ENCODE measurements at regions of chr2 and their contacts with region 1.

Region 1: GRCh38 chr2:23926750-23927571 is at the start of gene ATAD2B:
- DNase-seq: peak; percentile 99
- H3K4me3 Mint-ChIP-seq: peak within 1 kb of the TSS; percentile 91
- H3K27ac Mint-ChIP-seq: peak within 1 kb of the TSS; percentile 100
- H3K4me1 Mint-ChIP-seq: peaks cover 28% of the 10 kb centered on the region
- H3K27me3 Mint-ChIP-seq: peaks cover 2% of the 10 kb centered on the region
- total RNA-seq, gene ATAD2B: 23.9 and 24.3 TPM in 2 replicates

Region 2: DNA sequence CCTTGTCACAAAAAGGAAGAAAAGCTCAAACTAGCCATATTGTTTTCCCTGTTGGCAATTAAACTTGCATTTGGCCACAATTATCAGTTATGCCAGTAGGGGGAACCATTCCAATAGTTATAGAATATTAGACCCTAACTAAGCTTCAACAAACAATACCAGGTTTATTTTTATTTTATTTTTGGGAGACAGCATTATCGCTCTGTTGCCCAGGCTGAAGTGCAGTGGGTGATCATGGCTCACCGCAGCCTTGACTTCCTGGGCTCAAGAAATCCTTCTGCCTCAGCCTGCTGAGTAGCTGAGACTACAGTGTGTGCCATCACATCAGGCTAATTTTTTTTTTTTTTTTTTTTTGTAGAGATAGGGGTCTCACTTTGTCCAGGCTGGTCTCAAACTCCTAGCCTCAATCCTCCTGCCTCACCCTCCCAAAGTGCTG is 102.2 kb before region 1 on chr2:
- intact Hi-C with region 1: loop called (anchors 1 kb)
- DNase-seq: peak; percentile 83
- H3K4me3 Mint-ChIP-seq: no peak overlapping the region
- H3K27ac Mint-ChIP-seq: no peak overlapping the region
- H3K4me1 Mint-ChIP-seq: peaks cover 2% of the 10 kb centered on the region
- H3K27me3 Mint-ChIP-seq: no peaks in the 10 kb centered on the region

Region 3: DNA sequence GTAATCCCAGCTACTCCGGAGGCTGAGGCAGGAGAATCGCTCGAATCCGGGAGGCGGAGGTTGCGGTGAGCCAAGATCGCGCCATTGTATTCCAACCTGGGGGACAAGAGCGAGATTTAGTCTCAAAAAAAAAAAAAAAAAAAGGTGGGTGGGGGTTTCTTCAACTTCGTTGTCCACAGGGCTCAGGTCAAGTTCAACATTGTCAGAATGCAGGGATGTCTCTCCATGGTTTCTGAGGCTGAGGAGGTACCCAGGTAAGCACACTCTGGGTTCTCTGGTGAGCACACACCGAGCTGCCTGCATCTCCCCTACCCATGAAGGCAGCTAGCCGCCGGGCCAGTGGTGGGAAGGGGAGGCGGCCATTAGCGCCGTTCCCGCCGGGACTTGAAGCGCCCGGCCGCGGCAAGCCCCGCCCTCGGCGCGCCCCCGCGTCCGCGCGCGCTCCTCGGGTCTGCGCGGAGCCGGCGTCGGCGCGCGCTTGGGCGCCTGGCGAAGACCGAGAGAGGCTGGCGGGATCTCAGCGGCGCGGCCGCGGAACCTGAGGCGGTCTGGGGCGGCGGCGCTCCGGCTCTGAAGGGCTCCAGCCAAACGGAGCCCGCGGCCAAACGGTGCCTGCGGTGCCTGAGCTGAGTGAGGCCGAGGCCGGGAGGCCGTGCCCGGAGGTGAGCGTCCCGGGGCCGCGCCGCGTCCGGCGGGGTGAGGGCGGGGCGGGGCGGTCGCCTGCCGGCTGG is 13.2 kb after region 1 on chr2 and contains the start of gene UBXN2A:
- intact Hi-C with region 1: loop called (anchors 1 kb)
- DNase-seq: peak; percentile 95
- H3K4me3 Mint-ChIP-seq: peak within 1 kb of the TSS; percentile 89
- H3K27ac Mint-ChIP-seq: peak within 1 kb of the TSS; percentile 88
- H3K4me1 Mint-ChIP-seq: peaks cover 20% of the 10 kb centered on the region
- H3K27me3 Mint-ChIP-seq: peaks cover 14% of the 10 kb centered on the region
- total RNA-seq, gene UBXN2A: 11.5 and 13.1 TPM in 2 replicates

Region 4: GRCh38 chr2:24009680-24010476 is 82.9 kb after region 1 on chr2 and contains the start of gene MFSD2B:
- intact Hi-C with region 1: no loop called
- DNase-seq: no peak
- H3K4me3 Mint-ChIP-seq: no peak within 1 kb of the TSS
- H3K27ac Mint-ChIP-seq: no peak within 1 kb of the TSS
- H3K4me1 Mint-ChIP-seq: peaks cover 2% of the 10 kb centered on the region
- H3K27me3 Mint-ChIP-seq: peaks cover 45% of the 10 kb centered on the region
- total RNA-seq, gene MFSD2B: 0.14 TPM in 1 of 2 replicates, not detected in the other

Region 5: GRCh38 chr2:24046930-24047702 is 120.2 kb after region 1 on chr2 and contains the start of gene WDCP:
- intact Hi-C with region 1: loop called (anchors 1 kb)
- DNase-seq: peak; percentile 98
- H3K4me3 Mint-ChIP-seq: peak within 1 kb of the TSS; percentile 99
- H3K27ac Mint-ChIP-seq: peak within 1 kb of the TSS; percentile 97
- H3K4me1 Mint-ChIP-seq: peaks cover 18% of the 10 kb centered on the region
- H3K27me3 Mint-ChIP-seq: peaks cover 7% of the 10 kb centered on the region
- total RNA-seq, gene WDCP: 22.9 and 25.0 TPM in 2 replicates

Region 6: DNA sequence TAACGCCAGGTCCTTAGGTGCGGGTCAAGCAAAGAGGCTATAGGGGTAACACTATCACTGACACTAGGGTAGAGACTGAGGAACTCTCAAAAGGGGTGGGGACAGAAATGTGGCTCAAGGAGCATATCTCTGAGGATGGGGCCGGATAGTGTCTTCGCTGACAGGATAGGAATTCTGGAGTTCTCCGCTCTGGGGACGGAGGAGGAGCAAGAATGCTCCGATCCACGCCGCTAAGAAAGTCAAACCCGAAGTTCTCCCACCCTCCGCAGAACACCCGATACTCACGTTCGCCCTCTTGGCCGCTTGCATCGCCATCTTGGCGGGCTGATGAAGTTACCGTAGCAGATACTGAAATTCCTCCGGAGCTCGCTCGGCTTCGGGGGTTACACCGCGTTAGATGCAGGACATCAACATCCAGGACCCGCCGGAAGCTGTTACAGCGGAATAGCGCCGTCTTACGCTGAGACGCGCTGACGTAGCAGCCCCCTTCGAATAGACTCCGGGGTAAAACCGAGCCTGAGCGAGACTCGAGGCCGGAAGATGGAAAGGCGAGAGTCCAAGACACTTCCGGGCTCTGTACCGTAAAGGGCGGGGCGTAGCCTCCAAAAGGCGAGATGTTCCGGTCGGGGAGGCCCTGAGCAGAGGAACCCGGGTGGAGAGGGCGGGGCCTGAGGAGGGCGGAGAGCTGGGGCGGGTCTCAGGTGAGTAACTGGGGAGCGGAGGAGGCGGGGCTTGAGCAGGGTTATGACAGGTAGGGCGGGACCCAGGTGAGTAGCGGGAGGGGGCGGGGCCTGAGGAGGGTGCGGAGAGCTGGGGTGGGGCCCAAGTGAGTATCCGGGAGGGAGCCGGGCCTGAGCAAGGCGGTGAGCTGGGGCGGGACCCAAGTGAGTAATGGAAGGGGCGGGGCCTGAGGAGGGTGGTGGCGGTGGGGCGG is 149.2 kb after region 1 on chr2 and contains the start of gene SF3B6:
- intact Hi-C with region 1: loop called (anchors 1 kb)
- DNase-seq: peak; percentile 100
- H3K4me3 Mint-ChIP-seq: peak within 1 kb of the TSS; percentile 95
- H3K27ac Mint-ChIP-seq: peak within 1 kb of the TSS; percentile 96
- H3K4me1 Mint-ChIP-seq: peaks cover 23% of the 10 kb centered on the region
- H3K27me3 Mint-ChIP-seq: no peaks in the 10 kb centered on the region
- total RNA-seq, gene SF3B6: 143 and 154 TPM in 2 replicates

Region 7: GRCh38 chr2:24360050-24360962 is 433.3 kb after region 1 on chr2 and contains the start of gene ITSN2:
- intact Hi-C with region 1: loop called (anchors 5 kb)
- DNase-seq: peak; percentile 95
- H3K4me3 Mint-ChIP-seq: peak within 1 kb of the TSS; percentile 88
- H3K27ac Mint-ChIP-seq: peak within 1 kb of the TSS; percentile 90
- H3K4me1 Mint-ChIP-seq: peaks cover 23% of the 10 kb centered on the region
- H3K27me3 Mint-ChIP-seq: no peaks in the 10 kb centered on the region
- total RNA-seq, gene ITSN2: 53.0 and 55.7 TPM in 2 replicates